CD4-positive, alpha-beta T cell (primary cell): ENCODE measurements at regions of chr21 and their contacts with region 1.

Region 1: GRCh38 chr21:37380349-37381323 is 14.1 kb downstream of the DYRK1A start:
- DNase-seq: no peak
- ATAC-seq: no peak
- H3K4me3 ChIP-seq: no peak overlapping the region
- H3K4me3 Mint-ChIP-seq: peak overlapping the region; percentile 40
- H3K27ac ChIP-seq: no peak overlapping the region
- H3K27ac Mint-ChIP-seq: no peak overlapping the region
- H3K4me1 ChIP-seq: peaks cover 65% of the 10 kb centered on the region
- H3K4me1 Mint-ChIP-seq: peaks cover 93% of the 10 kb centered on the region
- H3K27me3 ChIP-seq: no peaks in the 10 kb centered on the region
- H3K27me3 Mint-ChIP-seq: no peaks in the 10 kb centered on the region
- CTCF ChIP-seq: no peak

Region 2: DNA sequence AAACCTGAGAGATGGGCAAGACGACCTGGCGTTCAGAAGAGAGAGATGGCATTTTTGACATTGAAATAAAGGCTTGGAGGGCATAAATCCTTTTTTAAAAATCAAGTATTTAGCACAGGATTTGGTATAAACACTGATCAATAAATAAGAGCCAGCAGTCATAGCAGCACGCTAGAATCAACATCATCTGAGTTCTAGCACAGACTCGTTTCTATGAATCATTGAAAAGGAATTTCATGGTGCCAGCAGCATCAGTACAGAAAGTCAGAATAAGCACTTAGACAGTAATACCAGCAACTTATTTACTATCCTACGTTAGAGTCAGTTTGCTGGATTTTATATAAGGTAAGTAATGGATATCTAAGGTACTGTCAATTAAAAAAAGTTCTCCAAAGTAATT is 533.5 kb before region 1 on chr21:
- CTCF ChIA-PET with region 1: no interaction called
- POLR2A ChIA-PET with region 1: no interaction called
- intact Hi-C with region 1: no loop called
- DNase-seq: no peak
- ATAC-seq: no peak
- H3K4me3 ChIP-seq: no peak overlapping the region
- H3K4me3 Mint-ChIP-seq: no peak overlapping the region
- H3K27ac ChIP-seq: no peak overlapping the region
- H3K27ac Mint-ChIP-seq: no peak overlapping the region
- H3K4me1 ChIP-seq: no peaks in the 10 kb centered on the region
- H3K4me1 Mint-ChIP-seq: no peaks in the 10 kb centered on the region
- H3K27me3 ChIP-seq: no peaks in the 10 kb centered on the region
- H3K27me3 Mint-ChIP-seq: no peaks in the 10 kb centered on the region
- CTCF ChIP-seq: no peak

Region 3: GRCh38 chr21:37128076-37128475 is 252.6 kb before region 1 on chr21:
- CTCF ChIA-PET with region 1: no interaction called
- POLR2A ChIA-PET with region 1: no interaction called
- intact Hi-C with region 1: no loop called
- DNase-seq: no peak
- ATAC-seq: no peak
- H3K4me3 ChIP-seq: no peak overlapping the region
- H3K4me3 Mint-ChIP-seq: no peak overlapping the region
- H3K27ac ChIP-seq: no peak overlapping the region
- H3K27ac Mint-ChIP-seq: no peak overlapping the region
- H3K4me1 ChIP-seq: no peaks in the 10 kb centered on the region
- H3K4me1 Mint-ChIP-seq: no peaks in the 10 kb centered on the region
- H3K27me3 ChIP-seq: no peaks in the 10 kb centered on the region
- H3K27me3 Mint-ChIP-seq: no peaks in the 10 kb centered on the region
- CTCF ChIP-seq: no peak

Region 4: GRCh38 chr21:37393786-37394185 is 13.2 kb after region 1 on chr21:
- CTCF ChIA-PET with region 1: interaction called, 4 read pairs
- POLR2A ChIA-PET with region 1: interaction called, 5 read pairs
- intact Hi-C with region 1: loop called in 1 of 2 experiments (anchors 2 kb)
- DNase-seq: no peak
- ATAC-seq: no peak
- H3K4me3 ChIP-seq: no peak overlapping the region
- H3K4me3 Mint-ChIP-seq: peak overlapping the region; percentile 23
- H3K27ac ChIP-seq: no peak overlapping the region
- H3K27ac Mint-ChIP-seq: peak overlapping the region; percentile 71
- H3K4me1 ChIP-seq: peaks cover 72% of the 10 kb centered on the region
- H3K4me1 Mint-ChIP-seq: peaks cover 89% of the 10 kb centered on the region
- H3K27me3 ChIP-seq: no peaks in the 10 kb centered on the region
- H3K27me3 Mint-ChIP-seq: no peaks in the 10 kb centered on the region
- CTCF ChIP-seq: no peak

Region 5: DNA sequence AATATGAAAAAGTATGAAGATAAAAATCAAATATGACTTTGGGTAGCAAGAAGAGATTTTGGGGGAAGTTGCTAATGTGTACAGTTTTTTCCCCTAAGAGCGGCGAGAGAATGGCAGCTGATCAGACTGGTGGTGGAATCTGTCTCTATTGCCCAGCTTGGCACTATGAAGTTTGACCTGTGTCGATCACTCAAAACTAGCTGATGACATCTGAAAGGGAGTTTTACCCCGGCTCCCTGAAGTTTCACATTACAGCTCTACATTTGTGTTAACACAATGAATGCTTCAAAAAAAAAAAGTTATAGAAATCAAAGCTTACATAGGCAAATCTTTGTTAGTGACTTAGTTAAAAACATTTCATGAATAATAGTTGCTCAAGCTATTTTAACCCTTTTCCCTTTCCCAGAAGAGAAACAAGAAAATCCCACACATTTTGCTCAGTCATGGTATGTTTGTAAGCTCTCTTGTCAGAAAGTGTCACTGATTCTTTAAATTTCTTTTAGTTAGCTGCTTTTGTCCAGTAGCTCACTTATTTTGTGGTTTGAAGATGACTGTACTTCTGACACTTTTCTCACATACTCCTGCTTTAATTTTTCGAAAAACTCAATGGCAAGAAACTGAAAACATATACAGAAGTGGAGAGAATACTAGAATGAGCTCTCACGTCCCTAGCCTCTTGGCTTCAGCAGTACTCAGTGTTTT is 27.2 kb after region 1 on chr21:
- CTCF ChIA-PET with region 1: no interaction called
- POLR2A ChIA-PET with region 1: interaction called, 3 read pairs
- intact Hi-C with region 1: loop called in 1 of 2 experiments (anchors 1 kb)
- DNase-seq: no peak
- ATAC-seq: no peak
- H3K4me3 ChIP-seq: no peak overlapping the region
- H3K4me3 Mint-ChIP-seq: peak overlapping the region; percentile 2
- H3K27ac ChIP-seq: no peak overlapping the region
- H3K27ac Mint-ChIP-seq: peak overlapping the region; percentile 6
- H3K4me1 ChIP-seq: peaks cover 52% of the 10 kb centered on the region
- H3K4me1 Mint-ChIP-seq: peaks cover 86% of the 10 kb centered on the region
- H3K27me3 ChIP-seq: no peaks in the 10 kb centered on the region
- H3K27me3 Mint-ChIP-seq: no peaks in the 10 kb centered on the region
- CTCF ChIP-seq: no peak

Region 6: GRCh38 chr21:37424396-37424795 is 43.8 kb after region 1 on chr21:
- CTCF ChIA-PET with region 1: no interaction called
- POLR2A ChIA-PET with region 1: no interaction called
- intact Hi-C with region 1: loop called in 1 of 2 experiments (anchors 5 kb)
- DNase-seq: no peak
- ATAC-seq: no peak
- H3K4me3 ChIP-seq: no peak overlapping the region
- H3K4me3 Mint-ChIP-seq: no peak overlapping the region
- H3K27ac ChIP-seq: no peak overlapping the region
- H3K27ac Mint-ChIP-seq: no peak overlapping the region
- H3K4me1 ChIP-seq: peaks cover 3% of the 10 kb centered on the region
- H3K4me1 Mint-ChIP-seq: peaks cover 83% of the 10 kb centered on the region
- H3K27me3 ChIP-seq: no peaks in the 10 kb centered on the region
- H3K27me3 Mint-ChIP-seq: no peaks in the 10 kb centered on the region
- CTCF ChIP-seq: no peak

Region 7: GRCh38 chr21:37435120-37435519 is 54.5 kb after region 1 on chr21:
- CTCF ChIA-PET with region 1: no interaction called
- POLR2A ChIA-PET with region 1: interaction called, 3 read pairs
- intact Hi-C with region 1: loop called in 1 of 2 experiments (anchors 5 kb)
- DNase-seq: peak in 9 of 14 experiments; percentile 12 to 85 (median 45)
- ATAC-seq: peak; percentile 99
- H3K4me3 ChIP-seq: no peak overlapping the region
- H3K4me3 Mint-ChIP-seq: no peak overlapping the region
- H3K27ac ChIP-seq: no peak overlapping the region
- H3K27ac Mint-ChIP-seq: no peak overlapping the region
- H3K4me1 ChIP-seq: peaks cover 23% of the 10 kb centered on the region
- H3K4me1 Mint-ChIP-seq: peaks cover 39% of the 10 kb centered on the region
- H3K27me3 ChIP-seq: no peaks in the 10 kb centered on the region
- H3K27me3 Mint-ChIP-seq: no peaks in the 10 kb centered on the region
- CTCF ChIP-seq: no peak

Region 8: GRCh38 chr21:37593015-37593414 is 212.4 kb after region 1 on chr21:
- CTCF ChIA-PET with region 1: no interaction called
- POLR2A ChIA-PET with region 1: no interaction called
- intact Hi-C with region 1: no loop called
- DNase-seq: no peak
- ATAC-seq: no peak
- H3K4me3 ChIP-seq: no peak overlapping the region
- H3K4me3 Mint-ChIP-seq: no peak overlapping the region
- H3K27ac ChIP-seq: no peak overlapping the region
- H3K27ac Mint-ChIP-seq: no peak overlapping the region
- H3K4me1 ChIP-seq: no peaks in the 10 kb centered on the region
- H3K4me1 Mint-ChIP-seq: no peaks in the 10 kb centered on the region
- H3K27me3 ChIP-seq: peaks cover 0 to 2% of the 10 kb centered on the region in 2 experiments
- H3K27me3 Mint-ChIP-seq: no peaks in the 10 kb centered on the region
- CTCF ChIP-seq: no peak